Sigmoid colon (tissue), 7 donors: ENCODE measurements at regions of chr1 and their contacts with region 1.

Region 1: DNA sequence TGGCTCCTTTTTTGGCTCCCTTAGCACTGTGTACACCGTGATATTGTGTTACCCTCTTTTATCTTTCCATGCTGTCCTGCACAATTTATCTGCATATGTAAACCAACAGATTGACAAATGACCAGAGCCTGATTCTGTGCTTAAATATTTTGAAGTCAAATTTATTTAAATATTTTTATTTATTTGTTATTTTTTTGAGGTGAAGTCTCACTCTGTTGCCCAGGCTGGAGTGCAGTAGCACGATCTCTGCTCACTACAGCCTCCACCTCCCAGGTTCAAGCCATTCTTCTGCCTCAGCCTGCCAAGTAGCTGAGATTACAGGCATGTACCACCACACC is 12.8 kb downstream of the PMF1 start:
- DNase-seq: no peak
- H3K4me3 ChIP-seq: no peak overlapping the region
- H3K27ac ChIP-seq: no peak overlapping the region
- H3K4me1 ChIP-seq: peaks cover 0 to 24% (median 14%) of the 10 kb centered on the region in 4 donors
- H3K27me3 ChIP-seq: no peaks in the 10 kb centered on the region
- CTCF ChIP-seq: peak in 2 of 4 experiments; percentile 6 to 8
- EP300 ChIP-seq: no peak
- POLR2A ChIP-seq: no peak

Region 2: GRCh38 chr1:156090822-156091188 is 134.8 kb before region 1 on chr1:
- intact Hi-C with region 1: loop called (anchors 1 kb)
- DNase-seq: peak; percentile 93
- H3K4me3 ChIP-seq: no peak overlapping the region
- H3K27ac ChIP-seq: peak overlapping the region in 1 of 4 donors; percentile 9
- H3K4me1 ChIP-seq: peaks cover 0 to 15% (median 5%) of the 10 kb centered on the region in 4 donors
- H3K27me3 ChIP-seq: no peaks in the 10 kb centered on the region
- CTCF ChIP-seq: peak; percentile 69 to 87 (median 84)
- EP300 ChIP-seq: no peak
- POLR2A ChIP-seq: no peak

Region 3: GRCh38 chr1:156146020-156146768 is 79.5 kb before region 1 on chr1:
- intact Hi-C with region 1: loop called (anchors 1 kb)
- DNase-seq: no peak
- H3K4me3 ChIP-seq: no peak overlapping the region
- H3K27ac ChIP-seq: peak overlapping the region in 1 of 4 donors; percentile 38
- H3K4me1 ChIP-seq: peaks cover 0 to 40% (median 36%) of the 10 kb centered on the region in 4 donors
- H3K27me3 ChIP-seq: peaks cover 5 to 21% (median 18%) of the 10 kb centered on the region in 3 donors
- CTCF ChIP-seq: peak; percentile 66 to 75 (median 72)
- EP300 ChIP-seq: no peak
- POLR2A ChIP-seq: no peak